ENCODE measurements at regions of chr1 and their contacts with region 1.

Region 1: DNA sequence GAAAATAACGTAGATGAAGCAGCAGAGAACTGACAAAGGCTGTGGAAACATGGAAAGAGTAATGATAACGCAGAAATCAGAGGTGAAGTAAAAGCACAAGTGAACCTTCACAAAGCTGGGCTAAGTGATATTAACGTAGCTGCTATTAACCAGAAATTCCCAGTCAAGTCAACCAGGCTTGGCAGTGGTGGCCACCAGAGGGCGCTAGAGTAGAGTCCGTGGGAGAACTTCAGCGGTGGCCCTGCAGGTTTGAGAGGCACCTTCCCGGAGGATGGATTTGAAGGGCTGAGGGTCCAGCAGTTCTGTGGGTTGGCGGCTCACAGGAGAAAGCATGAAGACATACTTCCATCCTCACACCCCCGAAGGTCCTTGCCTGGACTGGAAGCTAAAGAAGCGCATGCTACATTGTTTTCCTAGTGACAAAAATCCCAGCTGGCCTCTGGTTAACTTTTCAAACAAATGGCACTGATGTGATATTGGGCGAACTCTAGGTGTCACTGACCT is 81.7 kb upstream of the ZNF648 start:
- DNase-seq: peak; percentile 24
- H3K4me3 ChIP-seq: peak overlapping the region in 1 of 4 donors; percentile 16
- H3K27ac ChIP-seq: peak overlapping the region; percentile 94 to 98 (median 96)
- H3K4me1 ChIP-seq: peaks cover 19 to 65% (median 42%) of the 10 kb centered on the region in 3 donors
- H3K27me3 ChIP-seq: no peaks in the 10 kb centered on the region
- CTCF ChIP-seq: peak; percentile 85 to 99 (median 97)
- POLR2A ChIP-seq: no peak

Region 2: GRCh38 chr1:182299728-182300616 is 156.8 kb after region 1 on chr1:
- intact Hi-C with region 1: loop called (anchors 10 kb)
- DNase-seq: no peak
- H3K4me3 ChIP-seq: no peak overlapping the region
- H3K27ac ChIP-seq: peak overlapping the region in 2 of 4 donors; percentile 6 to 10
- H3K4me1 ChIP-seq: peaks cover 5 to 50% (median 15%) of the 10 kb centered on the region in 3 donors
- H3K27me3 ChIP-seq: no peaks in the 10 kb centered on the region
- CTCF ChIP-seq: no peak
- POLR2A ChIP-seq: no peak

Region 3: GRCh38 chr1:182391362-182392044 is 248.3 kb after region 1 on chr1 and contains the start of gene GLUL:
- intact Hi-C with region 1: loop called (anchors 5 kb)
- DNase-seq: peak; percentile 46
- H3K4me3 ChIP-seq: peak within 1 kb of the TSS; percentile 72 to 88 (median 86)
- H3K27ac ChIP-seq: peak within 1 kb of the TSS; percentile 97 to 99 (median 98)
- H3K4me1 ChIP-seq: peaks cover 8 to 71% (median 27%) of the 10 kb centered on the region in 3 donors
- H3K27me3 ChIP-seq: no peaks in the 10 kb centered on the region
- CTCF ChIP-seq: peak in 3 of 6 experiments; percentile 3 to 39 (median 35)
- POLR2A ChIP-seq: peak in 3 of 4 donors; percentile 94 to 100 (median 99)
- total RNA-seq, gene GLUL: 597 to 1,638 (median 1,035) TPM

Measured in esophagus squamous epithelium (tissue), 5 donors.